IMR-90 (cell line): ENCODE measurements at regions of chr10 and their contacts with region 1.

Region 1: DNA sequence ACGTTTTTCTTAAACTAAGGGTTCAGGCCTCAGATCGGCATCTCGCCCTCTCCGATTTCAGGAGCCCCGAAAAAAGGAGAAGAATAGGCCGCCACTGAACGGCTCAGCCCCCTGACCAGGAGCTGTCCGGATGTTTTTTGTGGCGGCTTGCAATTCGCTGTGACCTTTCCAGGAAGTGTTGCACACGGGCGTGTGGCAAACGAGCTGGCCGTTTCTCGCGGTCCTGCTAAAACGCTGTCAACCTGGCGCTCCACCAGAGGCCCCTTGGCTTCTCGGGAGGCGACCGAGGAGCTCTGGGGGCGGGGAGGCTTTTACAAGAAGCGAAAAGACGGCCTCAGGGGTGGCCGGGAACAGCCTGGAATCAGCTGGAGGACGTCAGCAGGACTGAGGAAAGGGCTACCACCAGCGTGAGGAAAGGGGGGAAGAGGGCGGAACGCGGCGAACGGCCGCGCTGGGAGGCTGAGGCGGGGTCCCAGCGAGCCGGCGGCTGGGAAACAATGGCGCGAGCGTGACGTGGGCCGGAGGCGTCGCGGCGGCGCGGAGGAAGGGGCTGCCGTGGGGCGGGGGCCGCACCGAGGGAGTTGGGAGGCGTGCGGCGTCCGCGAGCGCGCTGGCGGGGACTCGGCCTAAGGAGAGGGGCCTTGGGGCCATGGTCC is 493 bp downstream of the NT5C2 start:
- DNase-seq: peak; percentile 75
- ATAC-seq: peak; percentile 62
- H3K4me3 ChIP-seq: peak overlapping the region; percentile 92
- H3K27ac ChIP-seq: peak overlapping the region; percentile 98
- H3K4me1 ChIP-seq: peaks cover 16% of the 10 kb centered on the region
- H3K27me3 ChIP-seq: no peaks in the 10 kb centered on the region
- CTCF ChIP-seq: no peak
- POLR2A ChIP-seq: no peak; the same call in 1 of the 2 replicates
- RAD21 ChIP-seq: no peak

Region 2: DNA sequence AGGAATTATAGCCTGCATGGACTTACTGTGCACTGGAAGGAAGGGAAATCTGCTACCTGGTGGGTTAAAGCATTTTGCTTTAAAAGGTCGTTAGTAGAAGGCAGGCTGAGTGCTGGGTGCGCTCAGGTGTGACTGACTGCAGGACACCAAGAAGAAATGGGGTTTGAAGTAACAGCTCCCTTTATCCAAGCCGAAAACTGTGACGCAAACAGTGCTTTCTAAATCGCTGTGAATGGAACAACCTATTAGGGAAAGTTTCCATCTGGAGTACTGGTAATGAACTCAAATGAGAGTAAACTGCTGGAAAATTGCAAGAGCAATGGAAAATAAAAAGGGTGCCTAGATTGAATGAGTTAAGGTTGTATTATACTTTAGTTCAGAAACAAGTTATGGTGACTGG is 179.2 kb before region 1 on chr10:
- CTCF ChIA-PET with region 1: no interaction called
- POLR2A ChIA-PET with region 1: interaction called, 11 read pairs
- dilution Hi-C with region 1: no loop called
- in situ Hi-C with region 1: no loop called
- intact Hi-C with region 1: no loop called
- DNase-seq: no peak
- ATAC-seq: no peak
- H3K4me3 ChIP-seq: no peak overlapping the region
- H3K27ac ChIP-seq: no peak overlapping the region
- H3K4me1 ChIP-seq: peaks cover 4% of the 10 kb centered on the region
- H3K27me3 ChIP-seq: no peaks in the 10 kb centered on the region
- CTCF ChIP-seq: no peak
- POLR2A ChIP-seq: no peak
- RAD21 ChIP-seq: no peak

Region 3: DNA sequence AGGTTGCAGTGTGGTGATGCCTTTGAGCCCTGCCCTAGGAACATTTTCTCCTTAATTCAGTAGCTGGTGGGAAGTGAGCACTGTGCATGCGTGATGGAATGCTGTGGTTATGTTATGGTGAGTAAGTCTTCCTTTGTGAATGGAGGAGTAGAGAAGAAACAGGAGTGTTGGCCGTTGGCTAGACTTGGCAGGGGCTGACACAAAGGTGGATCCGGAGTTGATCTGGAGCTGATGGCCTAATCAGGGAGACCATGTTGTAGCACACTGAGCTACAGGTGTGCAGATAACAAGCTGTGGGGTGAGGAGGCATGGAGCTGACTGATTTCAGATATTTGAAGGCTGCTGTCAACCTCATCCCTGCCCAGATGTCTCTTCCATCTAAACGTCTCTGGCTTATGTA is 152.2 kb before region 1 on chr10:
- CTCF ChIA-PET with region 1: no interaction called
- POLR2A ChIA-PET with region 1: interaction called, 21 read pairs
- dilution Hi-C with region 1: no loop called
- in situ Hi-C with region 1: no loop called
- intact Hi-C with region 1: no loop called
- DNase-seq: peak; percentile 97
- ATAC-seq: peak; percentile 38
- H3K4me3 ChIP-seq: no peak overlapping the region
- H3K27ac ChIP-seq: peak overlapping the region; percentile 49
- H3K4me1 ChIP-seq: peaks cover 47% of the 10 kb centered on the region
- H3K27me3 ChIP-seq: no peaks in the 10 kb centered on the region
- CTCF ChIP-seq: no peak
- POLR2A ChIP-seq: no peak; the same call in 1 of the 2 replicates
- RAD21 ChIP-seq: peak; percentile 24

Region 4: DNA sequence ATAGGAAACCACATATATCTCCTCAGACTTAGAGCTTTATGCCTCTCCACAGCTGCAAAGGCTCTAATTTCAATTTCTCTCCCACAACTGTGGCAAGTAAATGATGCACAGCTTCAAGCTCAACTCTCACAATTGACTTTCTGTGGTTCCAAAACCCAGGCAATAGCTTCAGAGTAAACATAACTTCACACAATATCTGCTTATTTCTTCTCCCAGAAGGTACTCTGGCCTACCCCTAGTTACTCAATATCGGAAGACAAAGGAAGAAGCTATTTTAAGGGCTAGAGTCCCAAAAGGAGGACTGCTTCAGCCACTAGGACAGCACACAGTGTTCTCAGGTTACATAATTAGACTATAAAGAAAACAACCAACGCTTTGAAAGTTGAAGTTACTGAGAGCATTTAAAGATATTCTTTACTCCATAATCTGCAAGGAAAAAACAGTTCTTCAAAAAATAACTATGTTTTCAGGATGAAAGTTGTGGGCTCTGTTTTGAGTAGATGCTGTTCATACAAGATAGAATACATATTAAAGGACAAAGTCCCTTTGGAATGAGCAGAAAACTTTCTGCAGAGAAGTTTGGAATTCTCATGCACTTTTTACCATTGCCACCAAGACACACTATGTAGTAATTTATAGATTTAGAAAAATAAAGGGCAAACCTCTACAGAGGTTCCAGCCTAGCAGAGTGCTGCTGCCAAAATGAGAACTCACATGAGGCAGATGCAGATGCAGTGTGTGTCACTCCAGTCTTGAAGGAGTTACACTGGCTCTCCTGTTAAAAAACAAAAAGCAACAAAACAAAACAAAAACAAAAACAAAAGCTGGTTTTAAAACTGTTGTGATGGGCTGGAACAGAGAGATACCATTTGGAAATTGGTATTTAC is 81.3 kb before region 1 on chr10:
- CTCF ChIA-PET with region 1: interaction called, 3 read pairs
- POLR2A ChIA-PET with region 1: no interaction called
- dilution Hi-C with region 1: no loop called
- in situ Hi-C with region 1: no loop called
- intact Hi-C with region 1: loop called (anchors 5 kb)
- DNase-seq: peak; percentile 44
- ATAC-seq: peak; percentile 86
- H3K4me3 ChIP-seq: no peak overlapping the region
- H3K27ac ChIP-seq: no peak overlapping the region
- H3K4me1 ChIP-seq: peaks cover 3% of the 10 kb centered on the region; the same call in 1 of the 2 replicates
- H3K27me3 ChIP-seq: no peaks in the 10 kb centered on the region
- CTCF ChIP-seq: no peak
- POLR2A ChIP-seq: no peak
- RAD21 ChIP-seq: no peak

Region 5: DNA sequence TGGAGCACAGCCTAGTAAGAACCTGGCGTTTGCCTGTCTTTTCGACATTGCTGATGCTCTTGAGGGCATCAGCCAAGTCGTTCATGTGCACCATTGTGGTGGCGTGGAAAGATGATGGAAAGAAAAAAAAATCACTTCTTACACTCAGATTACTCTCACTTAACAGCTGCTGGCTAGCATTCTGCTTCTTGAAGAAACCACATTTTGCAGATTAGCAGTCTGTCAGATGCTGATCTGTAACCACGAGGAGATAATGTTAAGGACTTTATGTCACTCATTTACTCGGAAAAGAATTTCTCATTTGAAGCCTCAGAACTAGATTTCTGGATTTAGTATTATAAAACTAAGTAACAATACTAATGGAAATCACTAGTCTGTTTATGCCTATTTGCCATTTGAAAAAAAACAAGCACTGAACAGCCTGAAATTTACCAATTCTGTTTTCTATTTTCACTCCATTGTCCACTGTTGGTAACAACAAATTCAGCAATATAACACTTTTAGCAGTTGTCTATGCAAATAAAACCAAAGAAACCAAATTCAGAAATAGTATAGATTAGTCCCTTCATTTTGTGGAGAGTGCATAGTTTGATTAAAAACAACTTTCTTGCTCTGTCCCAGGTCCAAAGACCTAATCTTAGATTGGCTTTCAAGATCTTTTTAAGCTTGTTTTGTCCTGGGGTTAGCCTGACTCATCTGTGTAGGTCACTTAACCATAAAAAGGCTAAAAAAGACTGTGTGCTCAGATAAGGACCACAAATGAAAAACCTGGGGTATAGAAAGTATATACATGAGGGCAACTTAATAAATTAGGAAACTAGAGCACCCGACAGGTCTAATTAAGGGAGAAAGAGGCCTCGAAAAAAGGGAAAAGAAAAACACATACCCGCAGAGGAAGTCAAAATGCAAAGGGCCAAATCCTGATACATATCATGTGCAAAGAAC is 67.0 kb before region 1 on chr10:
- CTCF ChIA-PET with region 1: no interaction called
- POLR2A ChIA-PET with region 1: no interaction called
- dilution Hi-C with region 1: no loop called
- in situ Hi-C with region 1: no loop called
- intact Hi-C with region 1: no loop called
- DNase-seq: peak; percentile 19
- ATAC-seq: 0 out of 2 replicates have a peak, but pooled peaks have one; percentile 23
- H3K4me3 ChIP-seq: no peak overlapping the region
- H3K27ac ChIP-seq: no peak overlapping the region
- H3K4me1 ChIP-seq: peaks cover 12% of the 10 kb centered on the region
- H3K27me3 ChIP-seq: no peaks in the 10 kb centered on the region
- CTCF ChIP-seq: no peak
- POLR2A ChIP-seq: no peak
- RAD21 ChIP-seq: no peak

Region 6: DNA sequence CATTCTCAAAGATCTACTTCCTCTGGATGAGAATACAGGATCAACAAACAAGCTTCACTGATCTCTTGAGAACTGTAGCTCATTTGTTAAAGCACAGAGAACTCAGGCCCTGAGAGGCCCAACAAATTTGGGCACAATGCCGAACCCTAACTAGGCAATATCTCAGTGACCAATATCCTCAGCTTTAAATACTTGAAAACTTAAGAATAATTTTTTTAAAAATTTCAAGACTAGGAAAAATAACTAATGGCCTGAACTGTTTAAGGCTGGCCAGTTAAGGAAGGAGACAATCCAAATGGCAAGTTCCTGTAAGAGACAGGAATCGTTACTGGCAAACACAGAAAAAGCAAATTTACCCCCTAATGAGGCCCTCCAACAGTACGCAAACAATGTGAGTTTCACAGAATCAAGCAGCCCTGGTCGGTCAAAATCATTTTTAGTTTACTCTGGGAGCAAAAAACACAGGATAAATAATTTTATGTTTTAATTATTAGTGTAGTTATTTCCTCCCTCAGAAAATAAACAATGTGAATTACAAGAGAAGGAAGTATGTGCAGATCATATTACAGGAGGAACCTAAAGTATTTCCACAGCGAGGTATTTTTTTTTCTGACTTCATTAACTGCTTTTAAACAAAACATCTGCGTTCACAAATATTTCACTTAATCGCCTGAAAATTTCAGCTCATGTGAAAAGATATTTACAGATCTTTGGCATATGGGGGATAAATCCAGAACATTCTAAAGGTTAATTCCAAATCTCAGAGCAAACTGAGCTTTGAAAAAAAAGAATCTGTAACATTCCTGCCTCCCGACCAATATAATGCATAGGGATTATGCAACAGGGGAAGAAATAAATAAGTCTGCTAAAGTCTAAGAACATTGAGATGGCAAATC is 39.0 kb before region 1 on chr10:
- CTCF ChIA-PET with region 1: no interaction called
- POLR2A ChIA-PET with region 1: interaction called, 13 read pairs
- dilution Hi-C with region 1: no loop called
- in situ Hi-C with region 1: no loop called
- intact Hi-C with region 1: no loop called
- DNase-seq: peak; percentile 62
- ATAC-seq: peak; percentile 51
- H3K4me3 ChIP-seq: peak overlapping the region; percentile 23; the same call in 1 of the 2 replicates
- H3K27ac ChIP-seq: peak overlapping the region; percentile 89
- H3K4me1 ChIP-seq: peaks cover 11% of the 10 kb centered on the region
- H3K27me3 ChIP-seq: no peaks in the 10 kb centered on the region
- CTCF ChIP-seq: no peak
- POLR2A ChIP-seq: no peak
- RAD21 ChIP-seq: no peak

Region 7: DNA sequence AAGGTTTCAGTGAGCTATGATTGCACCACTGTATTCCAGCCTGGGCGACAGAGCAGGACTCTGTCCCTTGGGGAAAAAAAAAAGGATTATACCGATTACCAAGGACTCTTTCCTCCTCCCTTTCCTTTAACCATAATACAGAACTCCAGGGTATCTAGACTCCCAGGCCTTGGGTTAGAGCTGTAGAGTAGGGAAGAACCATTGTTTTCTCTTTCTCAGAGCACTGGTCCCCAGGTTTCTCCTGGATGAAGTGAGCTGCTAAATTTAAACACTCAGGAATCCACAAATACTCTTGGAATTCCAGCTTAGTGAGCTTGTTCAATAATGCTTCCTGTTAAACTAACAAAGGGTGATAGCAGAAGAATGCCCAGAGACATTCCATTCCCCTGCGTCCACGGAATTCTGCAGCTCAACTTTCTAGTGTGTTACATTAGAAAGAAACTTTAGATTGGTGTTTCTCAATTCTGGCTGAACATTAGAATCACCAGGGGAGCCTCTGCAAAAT is 38.5 kb after region 1 on chr10:
- CTCF ChIA-PET with region 1: no interaction called
- POLR2A ChIA-PET with region 1: interaction called, 9 read pairs
- dilution Hi-C with region 1: no loop called
- in situ Hi-C with region 1: loop called (anchors 5 kb)
- intact Hi-C with region 1: loop called (anchors 1 kb)
- DNase-seq: peak; percentile 97
- ATAC-seq: peak; percentile 83
- H3K4me3 ChIP-seq: no peak overlapping the region
- H3K27ac ChIP-seq: peak overlapping the region; percentile 93
- H3K4me1 ChIP-seq: peaks cover 19% of the 10 kb centered on the region
- H3K27me3 ChIP-seq: no peaks in the 10 kb centered on the region
- CTCF ChIP-seq: no peak
- POLR2A ChIP-seq: no peak
- RAD21 ChIP-seq: 0 out of 2 replicates have a peak, but pooled peaks have one; percentile 11